CD4-positive, alpha-beta memory T cell (primary cell): ENCODE measurements at regions of chr20 and their contacts with region 1.

Region 1: DNA sequence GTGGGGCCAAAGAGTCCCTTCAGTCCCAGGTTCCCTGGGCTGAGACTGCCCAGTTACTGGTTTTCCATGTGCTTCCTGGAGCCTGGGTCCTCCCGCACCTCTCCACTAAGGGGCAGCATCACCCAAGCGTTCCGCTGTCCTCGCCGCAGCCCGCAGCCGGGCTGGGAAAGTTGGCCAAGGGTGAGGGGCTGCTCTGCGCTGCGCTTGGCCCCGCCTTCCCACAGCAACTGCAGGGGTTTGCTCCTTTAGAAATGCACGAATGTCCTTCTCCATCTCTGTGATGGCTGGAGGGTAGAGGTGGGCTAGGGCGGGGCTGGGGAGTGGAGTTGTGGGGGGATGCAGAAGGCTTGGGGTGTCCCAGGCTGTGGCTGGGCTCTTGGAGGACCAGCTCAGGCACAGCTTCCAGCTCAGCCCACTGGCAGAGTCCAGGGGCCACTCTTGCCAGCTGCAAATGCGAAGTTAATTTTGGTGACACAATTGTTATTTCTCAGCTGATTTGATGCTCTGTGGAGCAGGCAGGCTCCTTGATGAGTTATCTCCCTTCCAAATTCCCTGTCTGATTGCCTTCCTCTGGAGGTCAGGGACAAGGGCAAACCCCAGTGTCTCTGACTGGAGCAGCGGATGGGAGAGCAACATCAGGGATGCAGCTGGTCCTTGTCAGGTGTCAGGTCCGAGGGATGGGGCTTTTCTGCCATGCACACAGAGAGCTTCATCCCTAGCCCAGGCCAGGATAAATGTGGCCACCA is 63.2 kb downstream of the NOL4L start:
- DNase-seq: peak; percentile 62 to 72 (median 70)
- H3K4me3 ChIP-seq: no peak overlapping the region
- H3K4me3 Mint-ChIP-seq: peak overlapping the region in 6 of 8 donors; percentile 21 to 76 (median 56)
- H3K27ac ChIP-seq: peak overlapping the region; percentile 38
- H3K27ac Mint-ChIP-seq: peak overlapping the region; percentile 68 to 90 (median 88)
- H3K4me1 ChIP-seq: peaks cover 59% of the 10 kb centered on the region
- H3K4me1 Mint-ChIP-seq: peaks cover 37 to 66% (median 56%) of the 10 kb centered on the region in 4 donors
- H3K27me3 ChIP-seq: no peaks in the 10 kb centered on the region
- H3K27me3 Mint-ChIP-seq: no peaks in the 10 kb centered on the region

Region 2: DNA sequence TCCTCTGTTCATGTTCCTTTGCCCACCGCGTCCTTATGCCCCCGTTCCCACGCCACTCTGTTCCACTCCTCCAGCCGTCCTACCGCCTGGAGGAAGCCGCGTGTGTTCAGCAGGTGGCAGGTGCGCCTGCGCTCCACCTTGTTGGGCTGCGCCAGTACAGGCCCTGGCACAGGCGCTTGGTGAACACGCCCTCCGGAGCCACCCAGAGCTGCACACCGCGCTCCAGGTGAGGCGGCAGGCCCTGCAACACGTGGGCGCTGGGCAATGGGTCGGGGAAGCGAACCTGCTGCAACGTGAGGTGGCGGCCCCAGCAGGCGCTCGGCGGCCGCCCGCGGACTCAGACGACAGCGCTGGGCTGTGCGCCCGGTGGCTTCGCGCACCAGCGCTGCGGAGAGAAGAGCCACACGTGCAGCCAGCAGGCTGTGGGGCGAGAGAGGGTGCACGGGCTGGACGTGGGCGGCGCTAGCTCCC is 672.5 kb before region 1 on chr20:
- CTCF ChIA-PET with region 1: no interaction called
- POLR2A ChIA-PET with region 1: no interaction called
- intact Hi-C with region 1: loop called (anchors 5 kb)
- DNase-seq: no peak
- H3K4me3 ChIP-seq: no peak overlapping the region
- H3K4me3 Mint-ChIP-seq: no peak overlapping the region
- H3K27ac ChIP-seq: no peak overlapping the region
- H3K27ac Mint-ChIP-seq: no peak overlapping the region
- H3K4me1 ChIP-seq: no peaks in the 10 kb centered on the region
- H3K4me1 Mint-ChIP-seq: no peaks in the 10 kb centered on the region
- H3K27me3 ChIP-seq: no peaks in the 10 kb centered on the region
- H3K27me3 Mint-ChIP-seq: peaks cover 11 to 21% of the 10 kb centered on the region in 2 donors

Region 3: DNA sequence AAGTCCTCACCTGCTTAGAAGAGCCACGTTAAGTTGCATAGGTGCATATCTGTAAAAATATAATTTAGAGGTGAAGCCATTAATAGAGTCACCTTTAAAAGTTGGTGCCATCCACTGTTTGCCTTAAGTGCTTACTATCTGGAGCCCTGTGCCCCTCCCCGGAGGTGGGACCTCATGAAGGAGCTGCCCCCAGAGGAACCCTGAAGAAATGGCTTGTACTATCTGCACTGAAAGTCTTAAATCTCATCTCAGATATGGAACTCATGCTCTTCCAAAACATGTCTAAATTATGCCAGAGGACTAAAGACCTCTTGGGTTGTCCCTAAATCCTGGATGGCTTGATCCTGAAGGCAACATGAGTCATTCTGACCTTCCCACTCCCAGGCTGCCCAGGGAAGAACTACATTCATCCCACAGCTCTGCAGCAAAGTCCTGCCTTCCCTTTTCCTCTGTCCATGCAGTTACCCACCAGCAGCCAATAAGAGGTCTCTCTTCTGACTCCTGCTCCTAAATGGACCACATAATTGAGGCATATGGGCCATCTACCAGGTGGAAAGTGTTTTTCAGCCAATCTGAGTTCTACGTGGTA is 78.5 kb before region 1 on chr20:
- CTCF ChIA-PET with region 1: no interaction called
- POLR2A ChIA-PET with region 1: no interaction called
- intact Hi-C with region 1: no loop called
- DNase-seq: no peak
- H3K4me3 ChIP-seq: no peak overlapping the region
- H3K4me3 Mint-ChIP-seq: no peak overlapping the region
- H3K27ac ChIP-seq: no peak overlapping the region
- H3K27ac Mint-ChIP-seq: peak overlapping the region; percentile 6 to 71 (median 48)
- H3K4me1 ChIP-seq: no peaks in the 10 kb centered on the region
- H3K4me1 Mint-ChIP-seq: peaks cover 7 to 28% (median 13%) of the 10 kb centered on the region in 4 donors
- H3K27me3 ChIP-seq: no peaks in the 10 kb centered on the region
- H3K27me3 Mint-ChIP-seq: no peaks in the 10 kb centered on the region

Region 4: GRCh38 chr20:32490942-32491763 is 30.8 kb before region 1 on chr20:
- CTCF ChIA-PET with region 1: no interaction called
- POLR2A ChIA-PET with region 1: no interaction called
- intact Hi-C with region 1: no loop called
- DNase-seq: no peak
- H3K4me3 ChIP-seq: no peak overlapping the region
- H3K4me3 Mint-ChIP-seq: no peak overlapping the region
- H3K27ac ChIP-seq: no peak overlapping the region
- H3K27ac Mint-ChIP-seq: peak overlapping the region in 6 of 7 donors; percentile 4 to 88 (median 64)
- H3K4me1 ChIP-seq: peaks cover 18% of the 10 kb centered on the region
- H3K4me1 Mint-ChIP-seq: peaks cover 28 to 55% (median 43%) of the 10 kb centered on the region in 4 donors
- H3K27me3 ChIP-seq: no peaks in the 10 kb centered on the region
- H3K27me3 Mint-ChIP-seq: no peaks in the 10 kb centered on the region

Region 5: DNA sequence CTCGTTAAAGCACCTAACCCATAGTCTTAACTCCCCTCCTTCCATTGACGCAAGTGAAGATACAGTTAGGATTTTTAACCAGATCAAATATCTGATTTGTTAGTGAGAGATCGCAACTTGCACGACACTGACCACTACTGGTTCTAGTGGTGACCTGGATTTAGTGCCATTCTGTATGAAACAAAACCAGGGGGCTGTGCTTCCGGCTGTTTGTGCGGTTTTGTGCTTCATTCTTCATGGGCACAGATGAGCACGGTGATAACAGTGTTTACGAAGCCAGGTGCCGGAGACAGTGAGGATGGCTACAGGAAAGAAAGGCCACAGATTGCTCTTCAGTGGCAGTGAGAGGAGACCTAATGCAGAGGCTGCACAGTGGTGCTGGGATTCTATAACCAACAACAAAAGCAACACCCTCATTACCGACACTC is 12.3 kb before region 1 on chr20:
- CTCF ChIA-PET with region 1: interaction called, 16 read pairs
- POLR2A ChIA-PET with region 1: interaction called, 9 read pairs
- intact Hi-C with region 1: no loop called
- DNase-seq: peak; percentile 76 to 89 (median 82)
- H3K4me3 ChIP-seq: peak overlapping the region in 1 of 2 donors; percentile 43
- H3K4me3 Mint-ChIP-seq: peak overlapping the region; percentile 77 to 86 (median 82)
- H3K27ac ChIP-seq: peak overlapping the region; percentile 60
- H3K27ac Mint-ChIP-seq: peak overlapping the region; percentile 92 to 97 (median 94)
- H3K4me1 ChIP-seq: peaks cover 71% of the 10 kb centered on the region
- H3K4me1 Mint-ChIP-seq: peaks cover 56 to 90% (median 68%) of the 10 kb centered on the region in 4 donors
- H3K27me3 ChIP-seq: no peaks in the 10 kb centered on the region
- H3K27me3 Mint-ChIP-seq: no peaks in the 10 kb centered on the region

Region 6: GRCh38 chr20:32558526-32558925 is 36.6 kb after region 1 on chr20:
- CTCF ChIA-PET with region 1: interaction called, 22 read pairs
- POLR2A ChIA-PET with region 1: interaction called, 9 read pairs
- intact Hi-C with region 1: no loop called
- DNase-seq: no peak
- H3K4me3 ChIP-seq: no peak overlapping the region
- H3K4me3 Mint-ChIP-seq: no peak overlapping the region
- H3K27ac ChIP-seq: no peak overlapping the region
- H3K27ac Mint-ChIP-seq: peak overlapping the region in 4 of 7 donors; percentile 22 to 78 (median 72)
- H3K4me1 ChIP-seq: peaks cover 53% of the 10 kb centered on the region
- H3K4me1 Mint-ChIP-seq: peaks cover 40 to 82% (median 68%) of the 10 kb centered on the region in 4 donors
- H3K27me3 ChIP-seq: no peaks in the 10 kb centered on the region
- H3K27me3 Mint-ChIP-seq: no peaks in the 10 kb centered on the region

Region 7: DNA sequence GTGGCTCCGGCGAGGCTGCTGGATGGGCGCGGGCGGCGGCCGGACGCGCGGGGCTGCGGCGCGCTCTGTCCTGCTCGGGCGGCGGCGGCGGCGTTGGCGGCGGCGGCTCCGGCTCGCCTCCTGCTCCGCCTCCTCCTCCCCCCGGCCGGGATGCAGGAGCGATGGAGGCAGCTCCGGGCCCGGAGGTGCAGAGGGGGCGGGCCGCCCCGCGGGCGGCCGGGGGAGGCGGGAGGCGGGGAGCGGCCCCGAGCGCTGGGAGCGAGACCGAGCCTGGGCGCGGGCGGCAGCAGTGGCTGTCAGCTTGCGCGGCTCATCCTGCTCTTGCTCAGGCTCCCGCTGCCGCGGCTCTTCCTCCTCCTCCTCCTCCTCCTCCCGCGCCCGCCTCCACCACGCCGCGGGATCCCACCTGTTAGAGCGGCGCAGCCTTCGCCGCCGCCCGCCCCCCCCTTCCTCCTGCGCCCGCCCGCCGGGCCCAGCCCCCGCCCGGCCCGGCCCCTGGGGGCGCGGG is 63.1 kb after region 1 on chr20 and contains the start of gene NOL4L:
- CTCF ChIA-PET with region 1: interaction called, 20 read pairs
- POLR2A ChIA-PET with region 1: interaction called, 16 read pairs
- intact Hi-C with region 1: loop called (anchors 2 kb)
- DNase-seq: peak; percentile 27 to 57 (median 37)
- H3K4me3 ChIP-seq: peak within 1 kb of the TSS; percentile 29 to 61
- H3K4me3 Mint-ChIP-seq: peak within 1 kb of the TSS; percentile 88 to 97 (median 91)
- H3K27ac ChIP-seq: peak within 1 kb of the TSS; percentile 49
- H3K27ac Mint-ChIP-seq: peak within 1 kb of the TSS; percentile 86 to 99 (median 92)
- H3K4me1 ChIP-seq: peaks cover 44% of the 10 kb centered on the region
- H3K4me1 Mint-ChIP-seq: peaks cover 14 to 26% (median 23%) of the 10 kb centered on the region in 4 donors
- H3K27me3 ChIP-seq: no peaks in the 10 kb centered on the region
- H3K27me3 Mint-ChIP-seq: no peaks in the 10 kb centered on the region
- total RNA-seq, gene NOL4L: 71.0 to 74.2 TPM